ENCODE measurements at regions of chr17 and their contacts with region 1.

Region 1: DNA sequence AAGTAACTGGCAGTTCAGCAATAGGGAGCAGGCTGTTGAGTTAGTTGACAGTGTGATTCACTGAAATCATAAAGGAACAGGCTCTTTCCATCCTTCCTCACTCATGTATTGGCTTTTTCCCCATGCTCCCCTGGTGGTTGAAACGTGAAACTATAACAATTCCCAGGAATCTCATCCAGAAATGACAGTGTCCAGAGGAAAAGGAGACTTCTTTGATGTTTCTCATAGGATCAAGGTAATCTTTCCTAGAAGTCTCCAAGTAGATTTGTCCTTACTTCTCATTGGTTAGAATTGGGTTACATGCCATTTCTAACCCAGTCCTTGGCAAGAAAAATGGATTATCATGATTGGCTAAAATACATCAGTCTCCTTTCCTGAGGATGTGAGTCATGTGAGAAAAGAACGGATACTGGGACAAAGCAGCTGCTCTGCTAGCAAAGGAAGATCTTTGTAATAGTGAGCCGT is 14.4 kb downstream of the TTC19 start:
- DNase-seq: peak; percentile 59
- H3K4me3 ChIP-seq: no peak overlapping the region
- H3K27ac ChIP-seq: peak overlapping the region; percentile 52
- H3K27me3 ChIP-seq: no peaks in the 10 kb centered on the region
- CTCF ChIP-seq: peak; percentile 84

Region 2: GRCh38 chr17:15364615-15365014 is 649.4 kb before region 1 on chr17:
- CTCF ChIA-PET with region 1: no interaction called
- POLR2A ChIA-PET with region 1: no interaction called
- DNase-seq: no peak
- H3K4me3 ChIP-seq: no peak overlapping the region
- H3K27ac ChIP-seq: no peak overlapping the region
- H3K27me3 ChIP-seq: peaks cover 2% of the 10 kb centered on the region
- CTCF ChIP-seq: no peak

Region 3: GRCh38 chr17:16106161-16106891 is 92.4 kb after region 1 on chr17:
- CTCF ChIA-PET with region 1: interaction called, 10 read pairs
- POLR2A ChIA-PET with region 1: no interaction called
- DNase-seq: peak; percentile 32
- H3K4me3 ChIP-seq: no peak overlapping the region
- H3K27ac ChIP-seq: no peak overlapping the region
- H3K27me3 ChIP-seq: no peaks in the 10 kb centered on the region
- CTCF ChIP-seq: no peak